ENCODE measurements at regions of chr11 and their contacts with region 1.

Region 1: GRCh38 chr11:61021661-61022212 is 50.3 kb downstream of the CD6 start:
- DNase-seq: peak; percentile 95
- H3K4me3 Mint-ChIP-seq: peak overlapping the region; percentile 67
- H3K27ac Mint-ChIP-seq: peak overlapping the region; percentile 90
- H3K4me1 Mint-ChIP-seq: peaks cover 71% of the 10 kb centered on the region
- H3K27me3 Mint-ChIP-seq: no peaks in the 10 kb centered on the region

Region 2: GRCh38 chr11:60970369-60970774 is 51.4 kb before region 1 on chr11:
- intact Hi-C with region 1: loop called (anchors 2 kb)
- DNase-seq: peak; percentile 95
- H3K4me3 Mint-ChIP-seq: peak overlapping the region; percentile 93
- H3K27ac Mint-ChIP-seq: peak overlapping the region; percentile 64
- H3K4me1 Mint-ChIP-seq: peaks cover 25% of the 10 kb centered on the region
- H3K27me3 Mint-ChIP-seq: peaks cover 11% of the 10 kb centered on the region

Region 3: GRCh38 chr11:60985991-60986915 is 35.5 kb before region 1 on chr11:
- intact Hi-C with region 1: loop called (anchors 2 kb)
- DNase-seq: peak; percentile 95
- H3K4me3 Mint-ChIP-seq: peak overlapping the region; percentile 84
- H3K27ac Mint-ChIP-seq: peak overlapping the region; percentile 94
- H3K4me1 Mint-ChIP-seq: peaks cover 88% of the 10 kb centered on the region
- H3K27me3 Mint-ChIP-seq: no peaks in the 10 kb centered on the region

Region 4: GRCh38 chr11:61004180-61004611 is 17.5 kb before region 1 on chr11:
- intact Hi-C with region 1: loop called (anchors 1 kb)
- DNase-seq: peak; percentile 80
- H3K4me3 Mint-ChIP-seq: peak overlapping the region; percentile 82
- H3K27ac Mint-ChIP-seq: peak overlapping the region; percentile 91
- H3K4me1 Mint-ChIP-seq: peaks cover 69% of the 10 kb centered on the region
- H3K27me3 Mint-ChIP-seq: no peaks in the 10 kb centered on the region

Region 5: DNA sequence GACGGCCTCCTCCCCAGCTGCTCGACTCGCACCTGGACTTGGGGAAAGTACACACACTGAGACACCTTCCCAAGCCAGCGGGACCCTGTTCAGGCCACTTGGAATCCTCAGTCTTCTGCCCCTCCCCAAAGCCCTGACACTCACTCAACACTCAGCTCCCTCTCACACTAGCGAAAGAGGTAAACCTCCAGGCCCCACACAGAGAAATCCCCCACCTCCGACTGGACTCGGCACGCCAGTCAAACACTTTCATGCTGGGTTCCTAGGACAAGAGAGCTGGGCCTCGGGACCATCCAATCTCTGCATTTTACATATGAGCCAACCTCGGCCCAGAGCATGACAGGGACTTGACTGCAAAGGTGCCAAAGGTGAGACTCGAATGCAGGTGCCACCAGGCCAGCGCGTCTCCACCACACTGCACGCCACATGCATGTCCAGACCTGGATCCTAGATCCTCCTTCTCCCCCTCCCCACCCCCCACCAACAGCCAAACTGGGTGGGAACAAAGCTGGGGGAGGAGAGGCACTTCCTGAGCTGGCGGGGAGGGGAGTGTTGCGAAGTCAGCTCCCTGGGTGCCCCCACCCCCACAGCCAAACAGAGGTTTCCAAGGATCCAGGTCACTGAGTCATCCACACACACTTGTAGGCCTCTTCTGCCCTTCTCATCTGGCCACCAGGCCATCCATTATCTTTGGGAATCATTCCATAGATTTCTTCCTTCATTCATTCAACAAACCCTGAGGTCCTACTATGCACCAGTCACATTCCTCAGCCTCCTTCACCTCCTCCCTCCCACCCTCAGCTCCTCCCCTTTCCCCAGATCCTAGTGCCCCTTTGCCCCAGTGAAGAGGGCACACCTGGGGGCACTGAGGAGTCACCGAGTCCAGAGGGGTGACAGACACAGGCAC is 69.9 kb after region 1 on chr11:
- intact Hi-C with region 1: loop called (anchors 2 kb)
- DNase-seq: peak; percentile 86
- H3K4me3 Mint-ChIP-seq: peak overlapping the region; percentile 93
- H3K27ac Mint-ChIP-seq: peak overlapping the region; percentile 100
- H3K4me1 Mint-ChIP-seq: peaks cover 69% of the 10 kb centered on the region
- H3K27me3 Mint-ChIP-seq: no peaks in the 10 kb centered on the region

Measured in activated CD4-positive, alpha-beta T cell treated with anti-CD3 and anti-CD28 coated beads, Interleukin-2, amount 10 ng/mL, durations not matched to agents 24 days and 14 days (primary cell).